Activated CD4-positive, alpha-beta memory T cell treated with anti-CD3 and anti-CD28 coated beads for 36 hours (primary cell): ENCODE measurements at regions of chr7 and their contacts with region 1.

Region 1: GRCh38 chr7:26200444-26201246 is at the start of gene HNRNPA2B1:
- DNase-seq: peak; percentile 98
- H3K4me3 Mint-ChIP-seq: peak within 1 kb of the TSS; percentile 99
- H3K27ac Mint-ChIP-seq: peak within 1 kb of the TSS; percentile 100
- H3K4me1 Mint-ChIP-seq: peaks cover 39% of the 10 kb centered on the region
- H3K27me3 Mint-ChIP-seq: peaks cover 6% of the 10 kb centered on the region
- total RNA-seq, gene HNRNPA2B1: 906 to 929 TPM

Region 2: DNA sequence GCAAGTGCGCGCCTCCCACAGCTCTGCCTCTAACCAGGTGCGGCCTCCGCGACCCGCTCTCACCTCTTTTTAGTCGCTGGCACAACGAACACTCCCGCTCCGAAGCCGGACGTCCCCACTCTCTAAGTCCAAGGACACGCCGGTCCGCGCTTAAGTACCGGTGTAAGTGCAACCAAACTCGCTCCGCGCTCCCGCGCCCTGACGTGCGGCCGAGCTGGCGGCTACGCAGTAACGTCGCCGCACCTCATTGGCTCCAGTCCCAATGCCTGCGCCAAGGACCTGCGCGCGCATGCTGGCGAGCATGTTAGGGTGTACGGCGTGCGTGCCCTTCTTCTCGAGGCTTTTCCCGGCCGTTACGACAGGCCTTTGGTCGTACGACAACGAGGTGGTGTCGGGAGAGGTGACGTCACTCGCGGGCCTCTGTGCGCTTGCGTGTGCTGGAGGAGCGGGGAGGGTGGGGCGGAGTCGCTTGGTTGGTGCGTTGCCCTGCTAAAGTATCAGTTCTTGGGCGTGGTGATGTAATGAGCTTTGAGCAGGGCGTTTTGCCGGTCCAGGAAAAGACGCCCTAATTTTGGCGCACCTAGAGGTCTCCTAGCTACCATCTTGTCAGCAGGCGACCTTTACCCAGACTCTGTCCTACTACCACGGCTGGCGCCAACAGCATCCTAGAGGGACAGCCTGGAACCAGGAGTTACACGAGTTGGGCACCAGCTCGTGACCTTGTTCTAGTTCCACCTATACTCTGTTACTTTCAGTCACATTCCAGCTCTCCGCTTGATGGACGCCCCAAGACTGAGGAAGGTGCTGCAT is 1075.3 kb before region 1 on chr7 and contains the start of gene CYCS:
- CTCF ChIA-PET with region 1: interaction called, 3 read pairs
- POLR2A ChIA-PET with region 1: no interaction called
- intact Hi-C with region 1: loop called (anchors 2 kb)
- DNase-seq: peak; percentile 100
- H3K4me3 Mint-ChIP-seq: peak within 1 kb of the TSS; percentile 100
- H3K27ac Mint-ChIP-seq: peak within 1 kb of the TSS; percentile 100
- H3K4me1 Mint-ChIP-seq: peaks cover 24% of the 10 kb centered on the region
- H3K27me3 Mint-ChIP-seq: no peaks in the 10 kb centered on the region
- total RNA-seq, gene CYCS: 199 to 207 TPM

Region 3: DNA sequence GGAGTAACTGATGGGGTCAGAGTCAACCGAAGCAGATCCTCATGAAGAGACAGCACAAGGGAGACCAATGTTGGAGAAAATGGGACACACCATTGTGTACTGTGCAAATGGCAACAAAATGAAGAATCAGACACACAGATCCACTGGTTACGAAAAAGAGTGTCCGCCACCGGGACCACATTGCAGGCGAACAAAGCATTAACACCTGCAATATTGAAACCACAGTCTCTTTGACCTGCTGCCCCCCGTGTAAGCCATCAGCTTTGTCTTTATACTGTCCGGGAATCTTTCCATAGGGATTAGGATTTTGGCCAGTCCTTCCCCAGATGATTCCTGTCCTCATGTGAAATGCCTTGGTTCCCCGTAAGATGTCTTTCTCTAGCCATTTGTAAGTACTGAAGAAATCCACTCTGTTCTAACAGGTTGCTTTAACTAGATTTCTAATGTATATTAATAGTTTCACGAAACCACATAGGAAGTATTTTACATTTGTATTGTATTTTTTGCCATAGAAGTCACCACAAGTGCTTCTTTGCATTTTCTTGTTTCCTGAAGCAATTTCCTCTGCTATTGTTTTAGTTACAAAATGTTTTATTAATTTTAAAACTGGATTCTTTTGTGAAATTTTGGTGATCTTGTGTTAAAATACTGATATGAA is 189.5 kb before region 1 on chr7:
- CTCF ChIA-PET with region 1: no interaction called
- POLR2A ChIA-PET with region 1: no interaction called
- intact Hi-C with region 1: no loop called
- DNase-seq: no peak
- H3K4me3 Mint-ChIP-seq: no peak overlapping the region
- H3K27ac Mint-ChIP-seq: no peak overlapping the region
- H3K4me1 Mint-ChIP-seq: peaks cover 3% of the 10 kb centered on the region
- H3K27me3 Mint-ChIP-seq: peaks cover 23% of the 10 kb centered on the region

Region 4: GRCh38 chr7:26090927-26091519 is 109.6 kb before region 1 on chr7:
- CTCF ChIA-PET with region 1: interaction called, 27 read pairs
- POLR2A ChIA-PET with region 1: interaction called, 3 read pairs
- intact Hi-C with region 1: loop called (anchors 1 kb)
- DNase-seq: no peak
- H3K4me3 Mint-ChIP-seq: no peak overlapping the region
- H3K27ac Mint-ChIP-seq: no peak overlapping the region
- H3K4me1 Mint-ChIP-seq: peaks cover 14% of the 10 kb centered on the region
- H3K27me3 Mint-ChIP-seq: no peaks in the 10 kb centered on the region

Region 5: DNA sequence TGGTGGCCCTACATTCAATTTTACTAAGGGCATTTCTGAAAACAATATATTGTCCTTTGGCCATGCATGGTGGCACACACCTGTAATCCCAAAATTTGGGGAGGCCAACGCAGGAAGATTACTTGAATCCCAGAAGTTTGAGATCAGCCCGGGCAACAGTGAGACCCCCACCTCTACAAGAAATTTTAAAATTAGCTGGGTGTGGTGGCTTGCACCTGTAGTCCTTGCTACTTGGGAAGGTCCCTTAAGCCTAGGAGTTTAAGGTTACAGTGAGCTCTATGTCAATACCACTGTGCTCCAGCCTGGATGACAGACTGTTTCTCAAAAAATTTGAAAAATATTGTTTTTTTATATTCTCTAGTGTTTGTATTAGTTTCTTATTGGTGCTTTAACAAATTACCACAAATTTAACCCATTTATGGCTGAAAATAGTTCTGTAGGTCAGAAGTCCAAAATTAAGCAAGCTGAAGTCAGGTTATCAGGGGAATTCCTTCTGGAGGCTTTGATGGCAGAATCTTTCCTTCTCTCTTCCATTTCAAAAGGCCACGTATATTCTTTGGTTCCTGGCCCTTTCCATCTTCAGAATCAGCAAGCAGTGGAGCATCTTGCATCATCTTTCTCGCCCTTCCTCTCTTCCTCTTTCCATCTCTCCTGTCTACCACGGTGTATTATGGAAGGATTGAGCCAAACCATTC is 13.3 kb after region 1 on chr7:
- CTCF ChIA-PET with region 1: no interaction called
- POLR2A ChIA-PET with region 1: interaction called, 10 read pairs
- intact Hi-C with region 1: no loop called
- DNase-seq: no peak
- H3K4me3 Mint-ChIP-seq: no peak overlapping the region
- H3K27ac Mint-ChIP-seq: no peak overlapping the region
- H3K4me1 Mint-ChIP-seq: peaks cover 21% of the 10 kb centered on the region
- H3K27me3 Mint-ChIP-seq: no peaks in the 10 kb centered on the region

Region 6: DNA sequence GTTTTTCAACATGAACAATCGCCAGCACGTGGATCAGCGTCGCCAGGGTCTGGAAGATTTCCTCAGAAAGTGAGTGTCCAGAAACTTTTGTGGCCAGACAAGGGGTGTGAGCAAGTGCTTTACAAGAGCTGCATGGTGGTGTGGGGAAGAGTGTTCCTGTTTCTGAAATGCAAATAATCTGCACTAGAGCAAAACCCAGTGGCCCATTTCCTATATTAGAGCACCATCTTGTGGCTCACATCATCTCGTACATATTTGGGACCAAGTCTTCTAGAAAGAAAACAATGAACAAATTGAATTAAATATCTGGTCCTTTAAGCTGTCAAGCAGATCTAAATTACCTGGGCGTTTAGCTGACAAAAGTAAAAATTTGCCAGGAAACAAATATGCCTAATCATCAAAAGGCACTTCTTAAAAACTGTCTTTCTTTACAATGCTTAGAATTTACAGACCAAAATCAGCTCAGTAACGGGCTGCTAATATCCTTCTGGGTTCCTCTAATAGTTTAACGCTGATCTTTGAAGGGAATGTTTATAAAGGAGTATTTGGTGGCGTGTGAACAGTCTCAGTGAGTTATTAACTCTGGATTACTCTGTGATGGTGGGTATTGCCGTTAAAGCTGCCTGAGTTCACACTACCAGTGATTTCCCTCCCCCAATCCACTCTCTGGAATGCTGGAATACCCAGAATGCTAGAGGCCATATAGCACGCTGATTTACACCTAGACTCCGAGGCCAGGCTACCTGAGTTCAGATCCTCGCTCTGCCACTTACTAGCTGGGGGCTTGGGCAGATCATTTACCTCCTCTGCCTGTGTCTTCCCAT is 164.6 kb after region 1 on chr7:
- CTCF ChIA-PET with region 1: interaction called, 12 read pairs
- POLR2A ChIA-PET with region 1: no interaction called
- intact Hi-C with region 1: no loop called
- DNase-seq: peak; percentile 51
- H3K4me3 Mint-ChIP-seq: no peak overlapping the region
- H3K27ac Mint-ChIP-seq: peak overlapping the region; percentile 31
- H3K4me1 Mint-ChIP-seq: peaks cover 12% of the 10 kb centered on the region
- H3K27me3 Mint-ChIP-seq: no peaks in the 10 kb centered on the region

Region 7: DNA sequence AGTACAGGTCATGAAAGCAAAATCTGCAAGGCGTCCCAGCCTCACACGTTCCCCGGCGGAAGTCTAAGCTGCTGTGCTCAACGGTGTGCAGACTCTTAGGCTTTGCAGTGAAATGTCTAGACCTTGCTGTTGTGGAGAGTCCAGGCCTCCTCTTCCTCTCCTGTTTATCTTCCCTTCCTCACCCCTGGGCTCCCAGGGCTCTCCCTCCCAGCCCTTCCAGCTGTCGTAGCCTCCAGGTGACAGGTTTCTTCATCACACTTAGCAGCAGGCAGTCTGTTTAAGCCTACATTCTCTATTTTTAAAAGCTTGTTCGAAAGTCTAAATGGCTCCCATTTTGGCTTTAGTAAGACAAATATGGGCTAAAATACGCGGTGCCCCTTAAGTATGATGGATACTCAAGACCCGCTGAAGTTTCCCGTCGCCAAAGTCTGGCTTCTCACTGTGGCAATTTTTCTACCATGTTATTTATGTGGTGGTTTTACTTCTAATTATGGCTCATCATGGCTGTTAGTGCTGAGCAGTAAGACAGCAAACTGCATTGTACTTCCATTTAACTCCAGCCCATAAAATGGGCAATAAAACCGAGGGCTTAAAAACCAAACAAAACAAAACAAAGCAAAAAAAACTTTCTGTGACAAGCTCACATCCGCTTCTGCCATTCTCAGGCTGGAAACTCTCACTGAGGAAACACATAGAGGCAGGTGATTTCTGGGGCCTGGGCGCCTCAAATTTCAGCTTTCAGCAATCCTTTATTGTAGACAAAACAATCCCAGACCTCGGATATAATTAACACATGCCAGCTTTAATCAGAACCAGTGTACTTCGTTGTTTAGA is 334.2 kb after region 1 on chr7:
- CTCF ChIA-PET with region 1: no interaction called
- POLR2A ChIA-PET with region 1: no interaction called
- intact Hi-C with region 1: no loop called
- DNase-seq: no peak
- H3K4me3 Mint-ChIP-seq: no peak overlapping the region
- H3K27ac Mint-ChIP-seq: no peak overlapping the region
- H3K4me1 Mint-ChIP-seq: no peaks in the 10 kb centered on the region
- H3K27me3 Mint-ChIP-seq: peaks cover 50% of the 10 kb centered on the region

Region 8: GRCh38 chr7:27739909-27740448 is 1539.3 kb after region 1 on chr7 and contains the start of gene TAX1BP1:
- CTCF ChIA-PET with region 1: no interaction called
- POLR2A ChIA-PET with region 1: interaction called, 3 read pairs
- intact Hi-C with region 1: loop called (anchors 2 kb)
- DNase-seq: peak; percentile 97
- H3K4me3 Mint-ChIP-seq: peak within 1 kb of the TSS; percentile 87
- H3K27ac Mint-ChIP-seq: peak within 1 kb of the TSS; percentile 99
- H3K4me1 Mint-ChIP-seq: peaks cover 39% of the 10 kb centered on the region
- H3K27me3 Mint-ChIP-seq: no peaks in the 10 kb centered on the region
- total RNA-seq, gene TAX1BP1: 104 to 105 TPM